Activated naive CD4-positive, alpha-beta T cell treated with anti-CD3 and anti-CD28 coated beads for 36 hours (primary cell): ENCODE measurements at regions of chr6 and their contacts with region 1.

Region 1: GRCh38 chr6:41591859-41592502 is 45.8 kb downstream of the FOXP4 start:
- DNase-seq: peak; percentile 89
- H3K4me3 Mint-ChIP-seq: no peak overlapping the region
- H3K27ac Mint-ChIP-seq: no peak overlapping the region
- H3K4me1 Mint-ChIP-seq: no peaks in the 10 kb centered on the region
- H3K27me3 Mint-ChIP-seq: no peaks in the 10 kb centered on the region

Region 2: GRCh38 chr6:41449399-41450245 is 142.4 kb before region 1 on chr6:
- CTCF ChIA-PET with region 1: interaction called, 11 read pairs
- intact Hi-C with region 1: no loop called
- DNase-seq: no peak
- H3K4me3 Mint-ChIP-seq: no peak overlapping the region
- H3K27ac Mint-ChIP-seq: no peak overlapping the region
- H3K4me1 Mint-ChIP-seq: no peaks in the 10 kb centered on the region
- H3K27me3 Mint-ChIP-seq: no peaks in the 10 kb centered on the region

Region 3: GRCh38 chr6:41560431-41561192 is 31.4 kb before region 1 on chr6:
- CTCF ChIA-PET with region 1: no interaction called
- intact Hi-C with region 1: no loop called
- DNase-seq: peak; percentile 94
- H3K4me3 Mint-ChIP-seq: peak overlapping the region; percentile 83
- H3K27ac Mint-ChIP-seq: peak overlapping the region; percentile 83
- H3K4me1 Mint-ChIP-seq: peaks cover 26% of the 10 kb centered on the region
- H3K27me3 Mint-ChIP-seq: no peaks in the 10 kb centered on the region